ENCODE measurements at regions of chr4 and their contacts with region 1.

Region 1: DNA sequence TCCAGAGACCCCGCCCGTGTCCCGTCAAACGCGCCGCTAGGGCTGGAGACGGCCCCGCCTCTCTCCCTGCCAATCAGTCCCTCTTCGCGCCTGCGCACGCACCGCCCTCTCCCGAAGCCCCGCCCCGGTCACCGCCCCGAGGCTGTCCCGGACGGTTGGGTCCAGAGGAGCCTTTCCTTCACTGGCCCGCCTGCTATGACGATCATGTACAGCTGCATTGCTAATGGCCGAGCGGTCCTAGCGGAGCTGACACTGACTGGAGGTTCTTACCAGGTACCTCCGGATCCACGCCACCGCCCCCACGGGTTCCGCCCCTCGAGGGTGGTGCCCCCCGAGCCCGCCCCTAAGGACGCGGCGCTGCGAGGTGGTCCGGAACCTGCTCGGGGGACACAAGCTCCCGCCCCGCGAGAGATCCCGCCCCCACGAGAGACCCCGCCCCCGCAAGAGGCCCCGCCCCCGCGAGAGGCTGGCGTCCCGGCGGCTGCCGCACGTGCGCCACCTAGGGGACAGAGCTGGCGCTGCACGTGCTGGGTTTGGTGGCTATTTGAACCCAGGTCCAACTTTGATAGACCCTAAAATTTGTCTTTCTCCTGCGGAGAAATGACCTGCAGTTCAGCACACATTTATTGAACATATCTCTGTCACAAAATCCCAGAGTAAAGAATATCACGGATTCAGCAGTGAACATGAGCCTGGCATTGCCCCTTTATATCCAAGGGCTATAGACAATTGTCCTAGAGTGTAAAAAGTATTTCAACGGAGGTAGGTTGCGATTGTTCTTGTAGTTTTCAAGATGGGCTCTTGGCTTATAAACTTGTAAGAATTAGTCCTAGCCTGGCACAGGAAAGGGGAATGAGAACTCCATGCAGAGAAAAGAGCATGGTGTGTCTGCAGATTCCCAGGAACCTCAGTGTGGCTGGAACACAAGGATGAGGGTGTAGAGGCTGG is 88.7 kb downstream of the HNRNPD start:
- DNase-seq: peak; percentile 100
- ATAC-seq: peak; percentile 92
- H3K4me3 ChIP-seq: peak overlapping the region; percentile 28 to 74 (median 61)
- H3K4me3 Mint-ChIP-seq: peak overlapping the region; percentile 79
- H3K27ac ChIP-seq: peak overlapping the region; percentile 57 to 59
- H3K27ac Mint-ChIP-seq: peak overlapping the region; percentile 75
- H3K4me1 ChIP-seq: peaks cover 14% of the 10 kb centered on the region in 2 donors
- H3K4me1 Mint-ChIP-seq: peaks cover 19% of the 10 kb centered on the region
- H3K27me3 ChIP-seq: no peaks in the 10 kb centered on the region
- H3K27me3 Mint-ChIP-seq: no peaks in the 10 kb centered on the region
- CTCF ChIP-seq: peak; percentile 95

Region 2: DNA sequence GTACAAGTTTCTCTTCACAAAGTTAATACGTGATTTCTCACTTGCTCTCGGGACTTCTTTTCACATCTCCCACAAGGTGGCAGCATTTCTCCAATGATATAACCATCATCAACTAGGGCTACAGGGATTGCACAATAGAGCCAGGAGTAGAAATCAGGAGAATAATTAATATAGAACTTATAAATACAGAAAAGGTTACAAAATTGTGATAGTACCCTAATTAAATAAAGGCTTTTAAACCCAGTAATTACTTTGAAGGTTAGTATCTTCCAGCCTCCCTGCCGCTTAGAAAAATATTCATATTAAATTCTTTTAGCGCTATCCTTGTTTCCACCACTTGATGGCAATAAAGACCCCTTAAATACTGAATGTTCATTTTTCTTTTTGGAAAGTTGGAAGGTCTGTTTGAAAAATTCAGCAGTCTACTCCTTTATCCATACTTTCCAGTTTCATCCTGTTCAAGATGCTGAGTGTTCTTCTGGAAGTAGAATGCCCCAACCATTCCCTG is 879.2 kb before region 1 on chr4:
- CTCF ChIA-PET with region 1: interaction called, 5 read pairs
- POLR2A ChIA-PET with region 1: no interaction called
- intact Hi-C with region 1: loop called (anchors 1 kb)
- DNase-seq: peak; percentile 85
- ATAC-seq: peak; percentile 85
- H3K4me3 ChIP-seq: peak overlapping the region in 1 of 5 experiments; percentile 12
- H3K4me3 Mint-ChIP-seq: no peak overlapping the region
- H3K27ac ChIP-seq: no peak overlapping the region
- H3K27ac Mint-ChIP-seq: no peak overlapping the region
- H3K4me1 ChIP-seq: no peaks in the 10 kb centered on the region
- H3K4me1 Mint-ChIP-seq: peaks cover 3% of the 10 kb centered on the region
- H3K27me3 ChIP-seq: no peaks in the 10 kb centered on the region
- H3K27me3 Mint-ChIP-seq: no peaks in the 10 kb centered on the region
- CTCF ChIP-seq: peak; percentile 99

Region 3: DNA sequence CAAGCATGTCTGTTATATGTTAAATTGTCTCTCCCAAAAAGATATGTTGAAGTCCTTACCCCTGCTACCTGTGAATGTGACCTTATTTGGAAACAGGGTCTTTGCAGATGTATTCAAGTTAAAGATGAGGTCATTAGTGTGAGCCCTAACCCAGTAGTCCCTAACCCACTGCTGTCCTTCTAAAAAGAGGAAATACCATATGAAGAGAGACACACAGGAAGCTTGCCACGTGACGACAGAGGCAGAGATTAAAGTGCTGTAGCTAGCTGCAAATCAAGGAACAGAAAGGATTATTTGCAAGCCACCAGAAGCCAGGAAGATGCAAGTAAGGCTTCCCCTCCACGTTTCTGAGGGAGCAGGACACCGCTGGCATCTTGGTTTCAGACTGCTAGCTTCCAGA is 61.4 kb before region 1 on chr4:
- CTCF ChIA-PET with region 1: no interaction called
- POLR2A ChIA-PET with region 1: no interaction called
- intact Hi-C with region 1: loop called (anchors 2 kb)
- DNase-seq: peak; percentile 75
- ATAC-seq: peak; percentile 98
- H3K4me3 ChIP-seq: peak overlapping the region in 3 of 5 experiments; percentile 7 to 29 (median 20)
- H3K4me3 Mint-ChIP-seq: peak overlapping the region; percentile 33
- H3K27ac ChIP-seq: peak overlapping the region in 1 of 2 donors; percentile 14
- H3K27ac Mint-ChIP-seq: peak overlapping the region; percentile 11
- H3K4me1 ChIP-seq: peaks cover 10 to 14% of the 10 kb centered on the region in 2 donors
- H3K4me1 Mint-ChIP-seq: peaks cover 12% of the 10 kb centered on the region
- H3K27me3 ChIP-seq: no peaks in the 10 kb centered on the region
- H3K27me3 Mint-ChIP-seq: peaks cover 14% of the 10 kb centered on the region
- CTCF ChIP-seq: no peak

Region 4: DNA sequence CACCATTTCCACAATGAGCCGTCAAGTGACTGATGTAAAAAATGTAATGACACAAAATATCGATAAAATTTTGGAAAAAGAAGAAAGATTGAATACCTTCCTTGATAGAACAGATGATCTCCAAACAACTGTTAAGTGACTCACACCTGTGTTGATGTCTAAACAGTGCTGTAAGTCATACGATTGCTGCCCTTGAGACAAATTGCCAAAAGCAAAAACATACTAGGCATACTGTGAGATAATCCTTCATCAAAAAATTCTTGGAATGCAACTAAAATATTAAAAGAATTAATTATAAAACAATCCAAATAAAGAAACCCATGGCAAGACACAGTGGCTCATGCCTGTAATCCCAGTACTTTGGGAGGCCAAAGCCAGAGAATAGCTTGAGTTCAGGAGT is 35.2 kb after region 1 on chr4:
- CTCF ChIA-PET with region 1: no interaction called
- POLR2A ChIA-PET with region 1: no interaction called
- intact Hi-C with region 1: no loop called
- DNase-seq: no peak
- ATAC-seq: no peak
- H3K4me3 ChIP-seq: no peak overlapping the region
- H3K4me3 Mint-ChIP-seq: no peak overlapping the region
- H3K27ac ChIP-seq: no peak overlapping the region
- H3K27ac Mint-ChIP-seq: no peak overlapping the region
- H3K4me1 ChIP-seq: no peaks in the 10 kb centered on the region
- H3K4me1 Mint-ChIP-seq: no peaks in the 10 kb centered on the region
- H3K27me3 ChIP-seq: no peaks in the 10 kb centered on the region
- H3K27me3 Mint-ChIP-seq: no peaks in the 10 kb centered on the region
- CTCF ChIP-seq: no peak

Region 5: GRCh38 chr4:82360298-82361177 is 75.4 kb after region 1 on chr4:
- CTCF ChIA-PET with region 1: interaction called, 13 read pairs
- POLR2A ChIA-PET with region 1: no interaction called
- intact Hi-C with region 1: loop called (anchors 2 kb)
- DNase-seq: peak; percentile 66
- ATAC-seq: peak; percentile 65
- H3K4me3 ChIP-seq: no peak overlapping the region
- H3K4me3 Mint-ChIP-seq: no peak overlapping the region
- H3K27ac ChIP-seq: peak overlapping the region in 1 of 2 donors; percentile 69
- H3K27ac Mint-ChIP-seq: peak overlapping the region; percentile 74
- H3K4me1 ChIP-seq: peaks cover 37 to 67% of the 10 kb centered on the region in 2 donors
- H3K4me1 Mint-ChIP-seq: peaks cover 75% of the 10 kb centered on the region
- H3K27me3 ChIP-seq: no peaks in the 10 kb centered on the region
- H3K27me3 Mint-ChIP-seq: no peaks in the 10 kb centered on the region
- CTCF ChIP-seq: peak; percentile 85

Region 6: DNA sequence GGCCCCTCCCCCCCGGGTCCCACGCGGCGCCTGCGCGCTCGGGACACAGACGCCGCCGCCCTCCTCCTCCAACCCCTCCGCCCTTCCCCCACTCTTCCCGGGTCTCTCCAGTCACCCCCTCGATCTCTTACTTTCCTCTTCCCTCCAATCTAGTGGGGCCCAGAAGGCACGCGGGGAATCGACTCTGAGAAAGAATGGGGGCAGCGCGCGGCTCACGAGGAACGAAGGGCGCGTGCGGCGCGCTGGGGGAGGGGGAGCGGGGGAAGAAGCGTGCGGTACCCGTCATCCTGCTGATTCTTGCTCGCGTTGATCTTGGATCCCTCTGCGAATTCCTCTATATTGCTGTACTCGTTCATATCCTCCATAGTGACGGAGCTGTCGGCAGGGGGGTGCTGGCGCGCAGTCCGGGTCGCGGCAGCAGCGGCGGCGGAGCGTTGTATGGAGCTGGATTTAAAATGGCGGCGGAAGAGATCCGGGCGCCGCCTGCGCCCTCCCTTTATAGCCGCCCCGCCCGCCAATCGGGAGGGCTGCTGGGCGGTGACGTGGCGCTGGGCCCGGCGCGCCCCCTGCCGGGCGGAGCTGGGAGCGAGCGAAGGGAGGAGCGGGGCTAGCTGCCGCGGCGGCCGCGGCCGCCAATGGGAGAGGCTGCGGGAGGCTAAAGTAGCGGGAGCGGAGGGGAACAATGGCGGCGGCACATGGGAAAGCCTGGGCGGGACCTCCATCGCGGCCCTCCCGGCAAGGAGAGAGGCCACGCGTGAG is 144.0 kb after region 1 on chr4:
- CTCF ChIA-PET with region 1: interaction called, 6 read pairs
- POLR2A ChIA-PET with region 1: interaction called, 11 read pairs
- intact Hi-C with region 1: loop called (anchors 1 kb)
- DNase-seq: peak; percentile 97
- ATAC-seq: peak; percentile 64
- H3K4me3 ChIP-seq: peak overlapping the region; percentile 98 to 99 (median 98)
- H3K4me3 Mint-ChIP-seq: peak overlapping the region; percentile 100
- H3K27ac ChIP-seq: peak overlapping the region; percentile 96 to 100
- H3K27ac Mint-ChIP-seq: peak overlapping the region; percentile 100
- H3K4me1 ChIP-seq: peaks cover 27 to 32% of the 10 kb centered on the region in 2 donors
- H3K4me1 Mint-ChIP-seq: peaks cover 48% of the 10 kb centered on the region
- H3K27me3 ChIP-seq: no peaks in the 10 kb centered on the region
- H3K27me3 Mint-ChIP-seq: no peaks in the 10 kb centered on the region
- CTCF ChIP-seq: peak; percentile 97

Region 7: DNA sequence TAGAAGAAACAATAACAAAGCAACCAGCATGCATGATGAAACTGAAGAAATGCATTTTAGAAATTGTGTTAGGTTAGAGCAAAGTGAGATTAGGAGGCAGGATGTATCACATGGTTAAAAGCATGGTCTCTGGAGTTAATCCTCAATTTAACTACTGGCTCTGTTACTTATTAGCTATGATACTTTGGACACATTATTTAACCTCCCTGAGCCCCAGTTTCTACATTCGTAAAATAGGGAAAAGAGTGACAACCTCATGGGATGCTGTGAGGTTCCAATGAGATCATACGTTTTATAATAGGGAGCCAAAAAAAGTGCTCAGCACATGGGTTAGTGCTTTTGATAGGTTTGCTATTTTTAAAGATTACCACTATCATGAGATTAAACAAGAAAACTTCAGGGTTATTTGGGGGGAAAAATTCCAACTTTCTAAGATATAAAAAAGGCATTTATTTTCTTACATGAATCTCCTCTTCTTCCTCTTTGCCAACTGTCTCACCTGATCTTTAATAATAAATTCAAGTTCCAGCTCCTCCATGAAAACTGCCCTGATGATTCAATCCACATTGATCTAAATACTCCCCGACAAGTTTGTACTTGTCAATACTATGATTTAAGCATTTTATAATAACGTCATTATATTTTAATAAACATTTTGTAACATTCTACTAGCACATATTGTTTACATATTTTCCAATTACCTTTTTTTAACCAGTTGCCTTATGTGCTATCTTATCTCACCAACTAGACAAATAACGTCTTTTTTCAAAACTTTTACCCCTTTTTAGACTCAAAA is 601.2 kb after region 1 on chr4:
- CTCF ChIA-PET with region 1: no interaction called
- POLR2A ChIA-PET with region 1: no interaction called
- intact Hi-C with region 1: no loop called
- DNase-seq: no peak
- ATAC-seq: no peak
- H3K4me3 ChIP-seq: no peak overlapping the region
- H3K4me3 Mint-ChIP-seq: no peak overlapping the region
- H3K27ac ChIP-seq: no peak overlapping the region
- H3K27ac Mint-ChIP-seq: no peak overlapping the region
- H3K4me1 ChIP-seq: peaks cover 12 to 13% of the 10 kb centered on the region in 2 donors
- H3K4me1 Mint-ChIP-seq: peaks cover 36% of the 10 kb centered on the region
- H3K27me3 ChIP-seq: no peaks in the 10 kb centered on the region
- H3K27me3 Mint-ChIP-seq: no peaks in the 10 kb centered on the region
- CTCF ChIP-seq: no peak

Region 8: DNA sequence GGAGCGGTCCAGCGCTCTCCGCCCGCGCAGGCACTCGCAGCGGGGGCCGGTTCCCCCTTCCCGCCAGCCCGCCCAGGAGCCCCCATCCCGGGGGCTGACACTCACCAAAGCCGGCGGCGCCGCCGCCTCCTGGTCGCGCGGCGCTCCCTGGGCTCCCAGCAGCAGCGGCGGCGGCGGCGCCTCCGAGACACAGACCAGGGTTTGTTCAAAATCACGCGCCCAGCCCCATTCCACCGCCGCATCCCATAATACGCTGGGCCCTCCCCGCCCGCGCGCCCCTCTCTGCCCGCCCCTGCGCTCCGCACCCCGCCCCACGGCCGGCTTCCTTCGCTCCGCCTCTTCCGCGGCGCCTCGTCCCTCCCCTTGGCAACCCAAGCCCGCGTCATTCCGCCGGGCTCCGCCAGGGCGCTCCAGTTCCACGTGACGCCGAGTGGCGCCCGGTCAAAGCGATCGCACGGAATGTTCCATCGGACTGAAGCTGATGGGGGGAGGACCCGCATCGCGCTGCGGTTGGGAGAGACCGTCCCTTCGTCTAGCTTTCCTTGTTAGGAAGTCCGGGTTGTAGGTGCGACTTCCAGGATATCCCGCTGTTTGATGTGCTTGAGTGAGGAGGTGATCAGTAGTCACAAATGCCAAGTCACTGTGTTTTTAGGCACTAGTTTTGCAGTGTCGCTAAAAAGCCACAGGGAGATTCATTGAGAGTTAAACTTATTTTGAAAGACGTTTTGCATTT is 727.7 kb after region 1 on chr4:
- CTCF ChIA-PET with region 1: no interaction called
- POLR2A ChIA-PET with region 1: no interaction called
- intact Hi-C with region 1: loop called (anchors 10 kb)
- DNase-seq: peak; percentile 99
- ATAC-seq: peak; percentile 89
- H3K4me3 ChIP-seq: peak overlapping the region; percentile 56 to 87 (median 79)
- H3K4me3 Mint-ChIP-seq: peak overlapping the region; percentile 92
- H3K27ac ChIP-seq: peak overlapping the region; percentile 37 to 72
- H3K27ac Mint-ChIP-seq: peak overlapping the region; percentile 91
- H3K4me1 ChIP-seq: peaks cover 24 to 33% of the 10 kb centered on the region in 2 donors
- H3K4me1 Mint-ChIP-seq: peaks cover 43% of the 10 kb centered on the region
- H3K27me3 ChIP-seq: no peaks in the 10 kb centered on the region
- H3K27me3 Mint-ChIP-seq: no peaks in the 10 kb centered on the region
- CTCF ChIP-seq: peak; percentile 59

Region 9: GRCh38 chr4:83153417-83153816 is 868.3 kb after region 1 on chr4:
- CTCF ChIA-PET with region 1: no interaction called
- POLR2A ChIA-PET with region 1: no interaction called
- intact Hi-C with region 1: no loop called
- DNase-seq: peak; percentile 30
- ATAC-seq: no peak
- H3K4me3 ChIP-seq: no peak overlapping the region
- H3K4me3 Mint-ChIP-seq: no peak overlapping the region
- H3K27ac ChIP-seq: no peak overlapping the region
- H3K27ac Mint-ChIP-seq: peak overlapping the region; percentile 1
- H3K4me1 ChIP-seq: peaks cover 26 to 27% of the 10 kb centered on the region in 2 donors
- H3K4me1 Mint-ChIP-seq: peaks cover 34% of the 10 kb centered on the region
- H3K27me3 ChIP-seq: no peaks in the 10 kb centered on the region
- H3K27me3 Mint-ChIP-seq: no peaks in the 10 kb centered on the region
- CTCF ChIP-seq: no peak

Measured in B cell (primary cell).